MCF 10A (cell line): ENCODE measurements at regions of chr1 and their contacts with region 1.

Region 1: DNA sequence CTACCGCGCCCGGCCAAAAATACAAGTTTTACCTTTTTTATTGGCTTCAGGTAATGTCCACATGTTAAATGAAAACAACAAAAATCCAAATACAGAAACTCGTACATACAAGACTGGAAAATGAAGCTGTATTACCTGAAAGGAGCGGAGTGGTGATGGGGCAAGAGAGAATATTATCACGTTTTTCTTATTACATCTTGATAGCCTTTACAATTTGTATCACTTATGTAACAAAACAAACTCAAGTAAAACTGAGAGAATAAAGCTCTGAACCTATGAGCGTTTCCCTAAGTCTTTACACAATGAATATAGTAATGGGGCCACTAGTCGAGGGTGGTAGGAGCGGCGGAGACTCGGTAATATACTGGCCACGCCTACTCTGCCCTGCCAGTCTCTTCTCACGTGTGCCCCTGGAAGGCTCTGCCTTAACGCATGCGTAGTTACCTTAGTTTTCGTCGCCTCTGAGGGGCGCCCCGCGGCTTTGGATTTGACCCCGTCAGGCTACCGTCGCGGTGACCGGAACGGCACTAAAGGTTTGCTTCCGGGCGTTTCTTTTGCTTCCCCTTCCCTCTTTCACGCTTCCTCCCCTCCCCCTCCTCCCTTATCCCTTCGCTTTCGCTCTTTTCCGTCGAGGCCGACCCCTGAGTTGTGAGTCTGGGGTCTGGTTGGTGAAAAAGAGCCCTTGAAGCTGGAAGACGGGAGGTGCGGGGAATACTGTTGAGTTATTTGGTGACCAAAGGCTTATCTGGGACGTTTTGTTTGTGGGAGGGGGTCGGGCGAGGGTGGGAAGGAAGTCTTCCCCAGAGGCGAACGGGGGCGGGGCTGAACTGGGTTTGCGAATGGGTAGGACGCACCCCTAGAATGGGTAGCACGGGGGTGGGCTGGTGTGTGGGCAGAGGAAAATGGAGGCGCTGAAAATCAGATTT is at the start of gene SETDB1:
- DNase-seq: peak; percentile 99
- H3K4me3 Mint-ChIP-seq: peak within 1 kb of the TSS; percentile 98
- H3K27ac Mint-ChIP-seq: peak within 1 kb of the TSS; percentile 98
- H3K4me1 Mint-ChIP-seq: peaks cover 18% of the 10 kb centered on the region
- H3K27me3 Mint-ChIP-seq: no peaks in the 10 kb centered on the region
- CTCF ChIP-seq: no peak
- total RNA-seq, gene SETDB1: 67.4 and 69.4 TPM in 2 replicates

Region 2: GRCh38 chr1:150629115-150629928 is 296.8 kb before region 1 on chr1 and contains the start of gene ENSA:
- CTCF ChIA-PET with region 1: no interaction called
- POLR2A ChIA-PET with region 1: interaction called, 6 read pairs
- intact Hi-C with region 1: loop called (anchors 5 kb)
- DNase-seq: peak; percentile 100
- H3K4me3 Mint-ChIP-seq: no peak within 1 kb of the TSS
- H3K27ac Mint-ChIP-seq: no peak within 1 kb of the TSS
- H3K4me1 Mint-ChIP-seq: peaks cover 44% of the 10 kb centered on the region
- H3K27me3 Mint-ChIP-seq: no peaks in the 10 kb centered on the region
- CTCF ChIP-seq: no peak
- total RNA-seq, gene ENSA: 261 and 294 TPM in 2 replicates

Region 3: DNA sequence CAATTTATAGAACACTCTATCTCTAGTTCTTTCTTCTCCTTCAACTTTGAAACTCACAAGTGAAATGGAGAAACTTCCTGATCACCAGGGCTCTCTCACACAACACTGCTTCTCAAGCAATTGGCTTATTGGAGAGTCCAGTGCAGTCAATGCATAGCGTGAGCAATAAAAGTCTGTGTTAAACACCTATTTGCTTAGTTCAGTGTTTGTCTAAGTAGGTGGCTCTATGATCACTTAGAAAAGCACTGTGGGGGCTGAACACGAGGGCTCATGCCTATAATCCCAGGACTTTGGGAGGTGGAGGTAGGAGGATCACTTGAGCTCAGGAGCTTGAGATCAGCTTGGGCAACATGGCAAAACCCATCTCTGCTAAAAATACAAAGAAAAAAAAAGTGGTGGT is 172.7 kb before region 1 on chr1:
- CTCF ChIA-PET with region 1: no interaction called
- POLR2A ChIA-PET with region 1: no interaction called
- intact Hi-C with region 1: no loop called
- DNase-seq: no peak
- H3K4me3 Mint-ChIP-seq: no peak overlapping the region
- H3K27ac Mint-ChIP-seq: no peak overlapping the region
- H3K4me1 Mint-ChIP-seq: peaks cover 15% of the 10 kb centered on the region
- H3K27me3 Mint-ChIP-seq: no peaks in the 10 kb centered on the region
- CTCF ChIP-seq: no peak

Region 4: DNA sequence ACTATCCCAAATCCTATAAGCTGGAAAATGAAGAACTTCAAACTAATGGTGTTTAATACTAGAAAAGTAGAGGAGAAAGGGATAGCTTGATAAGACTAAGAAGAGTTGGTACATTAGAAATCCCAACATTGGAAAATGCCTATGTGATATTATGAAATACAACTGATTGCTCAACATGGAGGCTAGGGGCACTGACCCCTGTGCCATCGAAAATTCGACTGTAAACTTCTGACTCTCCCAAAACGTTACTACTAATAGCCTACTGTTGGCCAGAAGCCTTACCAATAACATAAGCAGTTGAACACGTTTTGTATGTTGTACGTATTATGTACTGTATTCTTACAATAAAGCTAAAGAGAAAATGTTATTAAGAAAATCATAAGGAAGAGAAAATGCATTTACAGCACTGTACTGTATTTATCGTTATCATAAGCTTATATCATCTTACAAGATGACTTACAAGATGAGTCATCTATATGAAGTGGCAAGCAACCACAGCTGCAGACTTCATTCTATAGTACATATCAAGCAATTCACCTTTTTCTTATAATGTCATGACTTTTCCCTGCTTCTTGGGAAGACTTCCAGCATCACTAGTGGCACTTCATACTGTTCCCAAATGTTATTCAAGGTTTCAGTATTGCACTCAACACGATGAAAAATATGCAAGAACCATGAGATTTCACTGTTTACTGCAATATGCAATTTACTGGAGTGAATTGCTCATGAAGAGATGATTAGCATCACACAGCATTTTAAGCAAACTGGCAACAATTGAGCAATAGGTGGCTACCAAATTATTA is 105.2 kb before region 1 on chr1:
- CTCF ChIA-PET with region 1: interaction called, 7 read pairs
- POLR2A ChIA-PET with region 1: interaction called, 7 read pairs
- intact Hi-C with region 1: loop called (anchors 1 kb)
- DNase-seq: peak; percentile 63
- H3K4me3 Mint-ChIP-seq: no peak overlapping the region
- H3K27ac Mint-ChIP-seq: no peak overlapping the region
- H3K4me1 Mint-ChIP-seq: peaks cover 11% of the 10 kb centered on the region
- H3K27me3 Mint-ChIP-seq: no peaks in the 10 kb centered on the region
- CTCF ChIP-seq: no peak

Region 5: GRCh38 chr1:150869683-150870082 is 56.4 kb before region 1 on chr1:
- CTCF ChIA-PET with region 1: interaction called, 15 read pairs
- POLR2A ChIA-PET with region 1: interaction called, 23 read pairs
- intact Hi-C with region 1: no loop called
- DNase-seq: no peak
- H3K4me3 Mint-ChIP-seq: no peak overlapping the region
- H3K27ac Mint-ChIP-seq: no peak overlapping the region
- H3K4me1 Mint-ChIP-seq: peaks cover 23% of the 10 kb centered on the region
- H3K27me3 Mint-ChIP-seq: no peaks in the 10 kb centered on the region
- CTCF ChIP-seq: no peak

Region 6: DNA sequence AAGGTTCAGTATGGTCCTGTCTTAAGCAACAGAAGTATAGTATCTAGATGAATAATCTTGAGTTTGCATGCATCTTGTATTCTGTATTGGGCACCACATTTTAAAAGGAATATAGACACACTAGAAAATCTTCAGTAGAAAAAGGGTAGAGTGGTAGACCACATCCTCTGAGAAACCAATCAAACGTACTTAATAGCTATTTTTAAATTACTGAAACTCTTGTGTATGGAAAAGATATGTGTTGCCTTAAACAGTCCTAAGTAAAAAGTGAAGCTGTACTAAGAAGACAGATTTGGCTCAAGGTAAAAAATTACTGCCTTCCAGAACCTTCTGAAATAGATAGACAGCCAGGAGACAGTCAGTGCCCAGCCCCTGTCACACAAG is 36.1 kb before region 1 on chr1:
- CTCF ChIA-PET with region 1: interaction called, 15 read pairs
- POLR2A ChIA-PET with region 1: interaction called, 7 read pairs
- intact Hi-C with region 1: no loop called
- DNase-seq: no peak
- H3K4me3 Mint-ChIP-seq: no peak overlapping the region
- H3K27ac Mint-ChIP-seq: no peak overlapping the region
- H3K4me1 Mint-ChIP-seq: peaks cover 12% of the 10 kb centered on the region
- H3K27me3 Mint-ChIP-seq: no peaks in the 10 kb centered on the region
- CTCF ChIP-seq: no peak

Region 7: GRCh38 chr1:150979092-150980056 is 53.3 kb after region 1 on chr1:
- CTCF ChIA-PET with region 1: interaction called, 9 read pairs
- POLR2A ChIA-PET with region 1: interaction called, 16 read pairs
- intact Hi-C with region 1: loop called (anchors 5 kb)
- DNase-seq: peak; percentile 95
- H3K4me3 Mint-ChIP-seq: no peak overlapping the region
- H3K27ac Mint-ChIP-seq: no peak overlapping the region
- H3K4me1 Mint-ChIP-seq: peaks cover 32% of the 10 kb centered on the region
- H3K27me3 Mint-ChIP-seq: no peaks in the 10 kb centered on the region
- CTCF ChIP-seq: peak; percentile 100

Region 8: GRCh38 chr1:151013518-151013917 is 87.4 kb after region 1 on chr1:
- CTCF ChIA-PET with region 1: no interaction called
- POLR2A ChIA-PET with region 1: no interaction called
- intact Hi-C with region 1: no loop called
- DNase-seq: no peak
- H3K4me3 Mint-ChIP-seq: no peak overlapping the region
- H3K27ac Mint-ChIP-seq: no peak overlapping the region
- H3K4me1 Mint-ChIP-seq: peaks cover 7% of the 10 kb centered on the region
- H3K27me3 Mint-ChIP-seq: no peaks in the 10 kb centered on the region
- CTCF ChIP-seq: no peak

Region 9: DNA sequence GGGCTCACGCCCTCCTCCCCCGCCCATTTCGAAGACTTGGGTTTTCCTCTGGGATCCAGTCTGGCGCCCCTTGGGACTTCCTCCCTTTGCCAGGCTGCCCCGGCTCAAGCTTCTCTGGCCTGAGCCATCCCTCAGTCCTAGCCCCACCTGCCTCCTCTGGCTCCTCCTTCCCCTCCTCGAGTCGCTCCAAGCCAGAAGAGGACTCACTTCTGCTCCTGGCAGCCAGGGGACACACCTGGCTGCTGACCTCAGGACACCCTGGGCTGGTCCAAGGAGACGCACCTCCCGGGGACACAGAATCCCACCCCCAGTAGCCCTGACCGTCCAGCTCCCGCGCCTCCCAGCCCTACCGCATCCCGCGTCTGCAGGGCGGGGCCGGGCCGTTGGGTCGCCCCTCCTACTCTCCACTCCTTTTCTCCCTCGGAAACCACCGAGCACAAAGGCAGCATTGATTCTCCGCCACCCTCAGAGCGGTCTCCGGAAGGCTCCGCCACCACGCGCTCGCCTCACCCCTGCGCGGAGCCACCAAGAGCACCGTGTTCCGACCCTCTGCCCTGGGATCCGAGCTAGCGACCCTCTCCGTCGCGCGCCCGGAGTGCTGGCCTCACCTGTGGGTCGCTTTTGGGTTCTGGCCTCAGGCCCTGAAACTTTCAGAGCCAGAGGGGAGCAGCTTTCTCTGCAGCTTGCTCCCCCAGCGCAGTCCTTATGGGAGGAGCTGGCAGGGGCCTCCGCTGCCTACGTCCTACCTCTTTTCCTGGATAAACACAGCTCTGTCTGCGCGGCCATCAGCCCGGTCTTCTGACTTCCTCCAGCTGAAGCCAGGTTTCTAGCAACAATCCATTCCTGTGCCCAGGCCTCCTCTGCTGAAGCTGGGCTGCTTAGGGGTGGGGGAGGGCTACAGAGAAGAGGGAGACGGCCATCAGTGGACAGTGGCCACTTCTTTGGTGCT is 913.7 kb after region 1 on chr1 and contains the start of gene C2CD4D:
- CTCF ChIA-PET with region 1: no interaction called
- POLR2A ChIA-PET with region 1: no interaction called
- intact Hi-C with region 1: no loop called
- DNase-seq: peak; percentile 84
- H3K4me3 Mint-ChIP-seq: peak within 1 kb of the TSS; percentile 85
- H3K27ac Mint-ChIP-seq: peak within 1 kb of the TSS; percentile 91
- H3K4me1 Mint-ChIP-seq: peaks cover 41% of the 10 kb centered on the region
- H3K27me3 Mint-ChIP-seq: no peaks in the 10 kb centered on the region
- CTCF ChIP-seq: no peak
- total RNA-seq, gene C2CD4D: not detected in 2 replicates